ENCODE measurements at regions of chr12 and their contacts with region 1.

Region 1: DNA sequence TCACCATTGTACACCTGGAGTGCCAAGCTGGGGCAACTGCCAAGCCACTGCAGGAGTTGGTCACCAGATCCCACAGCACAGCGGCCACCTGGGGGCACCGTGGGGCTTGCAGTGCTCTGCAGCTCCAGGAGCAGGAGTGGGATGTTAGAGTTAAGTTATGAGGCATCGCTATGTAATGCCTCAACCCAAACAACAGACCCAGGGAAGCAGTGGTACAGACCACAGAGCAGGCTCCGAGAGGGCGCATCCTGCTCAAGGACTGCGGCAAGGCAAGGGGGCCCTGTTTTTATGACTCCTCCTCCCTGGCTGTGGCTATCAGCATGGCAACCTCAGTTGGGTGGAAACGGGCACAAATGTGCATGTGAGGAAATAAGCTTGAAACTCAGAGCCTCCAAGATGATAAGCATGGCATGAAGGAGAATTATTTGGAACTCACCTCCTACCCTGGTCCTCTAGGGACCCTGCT is 63.1 kb downstream of the ARL6IP4 start:
- DNase-seq: peak; percentile 58 to 69 (median 69)
- H3K4me3 ChIP-seq: no peak overlapping the region
- H3K4me3 Mint-ChIP-seq: peak overlapping the region in 4 of 8 donors; percentile 15 to 64 (median 46)
- H3K27ac ChIP-seq: no peak overlapping the region
- H3K27ac Mint-ChIP-seq: peak overlapping the region in 6 of 7 donors; percentile 8 to 87 (median 73)
- H3K4me1 ChIP-seq: peaks cover 11% of the 10 kb centered on the region
- H3K4me1 Mint-ChIP-seq: peaks cover 9 to 27% (median 16%) of the 10 kb centered on the region in 4 donors
- H3K27me3 ChIP-seq: no peaks in the 10 kb centered on the region
- H3K27me3 Mint-ChIP-seq: no peaks in the 10 kb centered on the region

Region 2: DNA sequence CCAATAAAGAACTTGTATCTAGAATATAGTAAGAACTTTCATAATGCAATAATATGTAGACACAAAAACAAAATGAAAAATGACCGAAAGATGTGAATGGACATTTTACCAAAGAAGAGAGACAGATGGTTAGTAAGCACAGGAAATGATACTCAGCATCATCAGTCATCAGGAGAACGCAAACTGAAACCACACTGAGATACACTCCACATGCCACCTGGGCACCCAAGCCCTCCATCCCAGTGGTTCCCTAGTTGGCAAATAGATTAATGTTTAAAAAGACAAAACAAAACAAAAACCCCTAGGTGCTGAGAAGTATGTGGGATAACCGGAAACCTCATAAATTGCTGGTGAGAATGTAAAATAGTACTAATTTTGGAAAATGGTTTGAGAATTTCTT is 750.5 kb before region 1 on chr12:
- CTCF ChIA-PET with region 1: no interaction called
- POLR2A ChIA-PET with region 1: no interaction called
- intact Hi-C with region 1: no loop called
- DNase-seq: no peak
- H3K4me3 ChIP-seq: no peak overlapping the region
- H3K4me3 Mint-ChIP-seq: no peak overlapping the region
- H3K27ac ChIP-seq: no peak overlapping the region
- H3K27ac Mint-ChIP-seq: peak overlapping the region in 1 of 7 donors; percentile 68
- H3K4me1 ChIP-seq: no peaks in the 10 kb centered on the region
- H3K4me1 Mint-ChIP-seq: peaks cover 0 to 2% (median under 1%) of the 10 kb centered on the region in 4 donors
- H3K27me3 ChIP-seq: no peaks in the 10 kb centered on the region
- H3K27me3 Mint-ChIP-seq: no peaks in the 10 kb centered on the region

Region 3: GRCh38 chr12:122336015-122336946 is 707.3 kb before region 1 on chr12:
- CTCF ChIA-PET with region 1: no interaction called
- POLR2A ChIA-PET with region 1: no interaction called
- intact Hi-C with region 1: no loop called
- DNase-seq: peak in 4 of 5 donors; percentile 20 to 36 (median 25)
- H3K4me3 ChIP-seq: no peak overlapping the region
- H3K4me3 Mint-ChIP-seq: peak overlapping the region in 1 of 8 donors; percentile 17
- H3K27ac ChIP-seq: no peak overlapping the region
- H3K27ac Mint-ChIP-seq: peak overlapping the region in 5 of 7 donors; percentile 25 to 79 (median 63)
- H3K4me1 ChIP-seq: peaks cover 5% of the 10 kb centered on the region
- H3K4me1 Mint-ChIP-seq: peaks cover 2 to 11% (median 6%) of the 10 kb centered on the region in 4 donors
- H3K27me3 ChIP-seq: no peaks in the 10 kb centered on the region
- H3K27me3 Mint-ChIP-seq: no peaks in the 10 kb centered on the region

Region 4: DNA sequence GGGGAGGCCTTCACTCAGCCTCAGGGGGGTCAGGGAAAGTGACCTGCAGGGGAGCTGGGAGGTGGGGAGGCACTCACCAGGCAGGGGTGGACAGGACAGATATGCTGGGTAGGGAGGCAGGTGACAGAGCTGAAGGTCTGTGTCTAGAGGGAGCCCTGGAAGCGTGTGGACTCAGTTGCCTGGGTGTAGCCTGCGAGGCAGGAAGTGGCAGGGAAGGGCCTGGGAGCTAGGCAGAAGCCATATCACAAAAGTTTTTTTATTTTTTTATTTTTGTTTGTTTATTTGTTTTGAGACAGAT is 23.8 kb before region 1 on chr12:
- CTCF ChIA-PET with region 1: no interaction called
- POLR2A ChIA-PET with region 1: no interaction called
- intact Hi-C with region 1: no loop called
- DNase-seq: no peak
- H3K4me3 ChIP-seq: no peak overlapping the region
- H3K4me3 Mint-ChIP-seq: no peak overlapping the region
- H3K27ac ChIP-seq: no peak overlapping the region
- H3K27ac Mint-ChIP-seq: peak overlapping the region in 2 of 7 donors; percentile 42 to 78
- H3K4me1 ChIP-seq: peaks cover 2% of the 10 kb centered on the region
- H3K4me1 Mint-ChIP-seq: peaks cover 4 to 18% (median 10%) of the 10 kb centered on the region in 4 donors
- H3K27me3 ChIP-seq: no peaks in the 10 kb centered on the region
- H3K27me3 Mint-ChIP-seq: no peaks in the 10 kb centered on the region

Region 5: DNA sequence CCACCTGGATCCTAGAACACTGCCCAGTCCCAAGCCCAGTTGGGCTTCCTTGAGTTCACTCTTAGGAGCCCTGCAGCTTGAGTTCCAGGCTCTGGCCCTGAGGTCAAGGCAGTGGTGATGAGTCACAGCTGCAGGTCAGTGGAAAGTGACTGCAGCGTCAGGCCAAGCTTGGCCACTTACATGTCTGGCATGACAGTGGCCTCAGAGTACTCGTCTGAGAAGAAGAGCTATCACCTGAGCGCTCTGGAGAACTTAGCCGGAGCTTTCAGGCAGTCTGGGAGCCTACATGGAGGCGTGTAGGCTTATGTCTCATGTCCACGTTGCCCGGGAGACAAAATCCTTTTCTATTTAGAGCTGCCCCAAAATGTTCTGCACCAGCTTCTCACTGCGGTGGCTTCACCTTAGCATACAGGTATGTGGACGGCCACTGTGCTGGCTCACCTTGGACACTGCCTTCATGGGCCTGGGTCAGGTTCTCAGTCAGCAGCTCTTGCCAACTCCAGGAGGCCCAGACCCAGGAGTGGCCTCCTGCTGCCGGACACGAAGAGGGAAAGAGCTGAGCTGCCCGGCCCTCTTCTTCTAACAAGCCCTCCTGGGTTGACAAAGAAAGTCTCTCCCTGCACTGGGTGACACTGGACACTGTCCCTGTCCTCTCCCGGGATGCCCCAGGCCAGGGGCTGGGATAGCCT is 12.6 kb after region 1 on chr12:
- CTCF ChIA-PET with region 1: interaction called, 14 read pairs
- POLR2A ChIA-PET with region 1: interaction called, 3 read pairs
- intact Hi-C with region 1: no loop called
- DNase-seq: no peak
- H3K4me3 ChIP-seq: no peak overlapping the region
- H3K4me3 Mint-ChIP-seq: no peak overlapping the region
- H3K27ac ChIP-seq: no peak overlapping the region
- H3K27ac Mint-ChIP-seq: peak overlapping the region in 2 of 7 donors; percentile 23 to 50
- H3K4me1 ChIP-seq: no peaks in the 10 kb centered on the region
- H3K4me1 Mint-ChIP-seq: peaks cover 0 to 2% (median under 1%) of the 10 kb centered on the region in 4 donors
- H3K27me3 ChIP-seq: no peaks in the 10 kb centered on the region
- H3K27me3 Mint-ChIP-seq: no peaks in the 10 kb centered on the region

Region 6: DNA sequence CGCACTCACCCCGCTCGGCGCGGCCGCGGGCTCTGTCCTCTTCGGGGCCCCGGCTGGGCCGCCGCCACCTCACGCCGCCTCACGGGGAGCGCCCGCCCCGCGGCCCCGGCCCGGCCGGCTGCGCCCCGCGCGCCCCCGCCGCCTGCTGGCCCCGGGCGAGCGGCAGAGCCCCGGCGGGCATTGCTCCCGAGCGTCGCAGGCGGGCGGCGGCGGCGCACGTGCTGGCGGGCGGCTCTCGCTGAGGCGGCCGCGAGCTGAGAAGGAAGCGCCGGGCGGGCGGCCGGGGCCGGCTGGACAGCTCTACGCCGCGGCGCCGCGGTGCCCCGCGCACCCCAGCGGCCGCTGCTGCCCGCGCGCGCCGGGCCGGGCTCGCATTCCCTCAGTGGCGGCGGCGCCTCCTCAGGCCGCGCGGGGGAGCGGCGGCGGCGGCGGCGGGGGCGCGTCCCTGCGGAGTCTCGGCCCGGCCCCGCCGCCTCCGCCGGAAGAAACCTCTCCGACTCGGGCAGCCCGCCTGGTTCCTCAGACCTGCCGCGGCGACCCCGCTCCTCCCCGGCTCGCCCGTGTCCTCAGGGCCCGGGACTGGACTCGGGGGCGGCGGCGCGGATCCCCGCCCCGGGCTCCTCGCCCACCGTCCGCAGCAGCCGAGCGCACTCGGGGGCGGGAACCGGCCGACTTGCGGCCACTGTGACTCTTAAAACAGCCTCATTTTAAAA is 107.3 kb after region 1 on chr12 and contains the start of gene PITPNM2:
- CTCF ChIA-PET with region 1: interaction called, 20 read pairs
- POLR2A ChIA-PET with region 1: interaction called, 8 read pairs
- intact Hi-C with region 1: loop called (anchors 1 kb)
- DNase-seq: peak; percentile 49 to 67 (median 63)
- H3K4me3 ChIP-seq: peak within 1 kb of the TSS; percentile 44 to 52
- H3K4me3 Mint-ChIP-seq: peak within 1 kb of the TSS; percentile 80 to 89 (median 86)
- H3K27ac ChIP-seq: peak within 1 kb of the TSS; percentile 34
- H3K27ac Mint-ChIP-seq: peak within 1 kb of the TSS; percentile 51 to 86 (median 73)
- H3K4me1 ChIP-seq: peaks cover 23% of the 10 kb centered on the region
- H3K4me1 Mint-ChIP-seq: peaks cover 17 to 41% (median 25%) of the 10 kb centered on the region in 4 donors
- H3K27me3 ChIP-seq: no peaks in the 10 kb centered on the region
- H3K27me3 Mint-ChIP-seq: no peaks in the 10 kb centered on the region
- total RNA-seq, gene PITPNM2: 15.7 to 16.8 TPM